ENCODE measurements at regions of chr12 and their contacts with region 1.

Region 1: DNA sequence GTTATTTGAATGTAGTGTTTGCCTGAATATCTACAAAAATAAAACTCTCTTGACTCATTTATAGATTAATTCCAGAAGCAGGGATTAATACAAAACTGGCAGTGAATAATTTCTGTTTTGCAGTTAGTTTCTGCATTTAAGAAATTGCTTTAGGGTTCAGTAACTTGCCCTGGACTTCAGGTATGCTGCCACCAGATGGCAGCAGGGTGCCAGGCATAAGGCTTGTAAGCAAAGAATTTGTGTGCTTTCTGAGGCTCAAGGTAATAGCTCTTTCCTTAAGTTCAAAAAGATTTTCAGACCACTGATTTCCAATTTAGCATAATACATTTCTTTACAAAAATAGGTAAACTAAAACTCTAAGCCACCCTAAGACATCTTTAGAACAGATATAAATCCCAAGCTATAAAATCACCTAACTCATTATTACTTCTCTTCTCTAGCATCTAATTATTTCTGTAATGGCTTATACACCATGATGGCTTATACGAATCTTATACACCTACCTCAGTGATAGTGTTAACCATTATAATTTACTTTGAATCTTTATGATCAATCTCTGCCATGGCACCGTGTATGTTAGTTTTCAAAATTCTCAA is 398.3 kb downstream of the APAF1 start:
- DNase-seq: peak; percentile 47 to 73
- H3K4me3 ChIP-seq: no peak overlapping the region
- H3K27ac ChIP-seq: no peak overlapping the region
- H3K4me1 ChIP-seq: no peaks in the 10 kb centered on the region
- H3K27me3 ChIP-seq: no peaks in the 10 kb centered on the region
- CTCF ChIP-seq: peak; percentile 64 to 85 (median 82)
- EP300 ChIP-seq: no peak
- POLR2A ChIP-seq: no peak
- RAD21 ChIP-seq: peak; percentile 99

Region 2: DNA sequence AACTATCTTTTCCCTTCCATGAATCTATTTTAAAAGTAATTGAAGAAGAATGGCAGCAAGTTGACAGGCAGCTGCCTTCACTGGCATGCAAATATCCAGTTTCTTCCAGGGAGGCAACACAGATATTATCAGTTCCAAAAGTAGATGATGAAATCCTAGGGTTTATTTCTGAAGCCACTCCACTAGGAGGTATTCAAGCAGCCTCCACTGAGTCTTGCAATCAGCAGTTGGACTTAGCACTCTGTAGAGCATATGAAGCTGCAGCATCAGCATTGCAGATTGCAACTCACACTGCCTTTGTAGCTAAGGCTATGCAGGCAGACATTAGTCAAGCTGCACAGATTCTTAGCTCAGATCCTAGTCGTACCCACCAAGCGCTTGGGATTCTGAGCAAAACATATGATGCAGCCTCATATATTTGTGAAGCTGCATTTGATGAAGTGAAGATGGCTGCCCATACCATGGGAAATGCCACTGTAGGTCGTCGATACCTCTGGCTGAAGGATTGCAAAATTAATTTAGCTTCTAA is 509.6 kb before region 1 on chr12:
- CTCF ChIA-PET with region 1: no interaction called
- POLR2A ChIA-PET with region 1: no interaction called
- DNase-seq: no peak
- H3K4me3 ChIP-seq: no peak overlapping the region
- H3K27ac ChIP-seq: no peak overlapping the region; the same call in 1 of the 2 replicates
- H3K4me1 ChIP-seq: no peaks in the 10 kb centered on the region
- H3K27me3 ChIP-seq: no peaks in the 10 kb centered on the region
- CTCF ChIP-seq: no peak
- EP300 ChIP-seq: no peak
- POLR2A ChIP-seq: no peak
- RAD21 ChIP-seq: no peak

Region 3: GRCh38 chr12:98909749-98910148 is 133.7 kb before region 1 on chr12:
- CTCF ChIA-PET with region 1: no interaction called
- POLR2A ChIA-PET with region 1: no interaction called
- DNase-seq: peak; percentile 33 to 70
- H3K4me3 ChIP-seq: no peak overlapping the region
- H3K27ac ChIP-seq: no peak overlapping the region
- H3K4me1 ChIP-seq: no peaks in the 10 kb centered on the region
- H3K27me3 ChIP-seq: no peaks in the 10 kb centered on the region
- CTCF ChIP-seq: no peak
- EP300 ChIP-seq: no peak
- POLR2A ChIP-seq: no peak
- RAD21 ChIP-seq: peak in 1 of 2 experiments; percentile 14; a peak in 1 of 4 replicates

Region 4: DNA sequence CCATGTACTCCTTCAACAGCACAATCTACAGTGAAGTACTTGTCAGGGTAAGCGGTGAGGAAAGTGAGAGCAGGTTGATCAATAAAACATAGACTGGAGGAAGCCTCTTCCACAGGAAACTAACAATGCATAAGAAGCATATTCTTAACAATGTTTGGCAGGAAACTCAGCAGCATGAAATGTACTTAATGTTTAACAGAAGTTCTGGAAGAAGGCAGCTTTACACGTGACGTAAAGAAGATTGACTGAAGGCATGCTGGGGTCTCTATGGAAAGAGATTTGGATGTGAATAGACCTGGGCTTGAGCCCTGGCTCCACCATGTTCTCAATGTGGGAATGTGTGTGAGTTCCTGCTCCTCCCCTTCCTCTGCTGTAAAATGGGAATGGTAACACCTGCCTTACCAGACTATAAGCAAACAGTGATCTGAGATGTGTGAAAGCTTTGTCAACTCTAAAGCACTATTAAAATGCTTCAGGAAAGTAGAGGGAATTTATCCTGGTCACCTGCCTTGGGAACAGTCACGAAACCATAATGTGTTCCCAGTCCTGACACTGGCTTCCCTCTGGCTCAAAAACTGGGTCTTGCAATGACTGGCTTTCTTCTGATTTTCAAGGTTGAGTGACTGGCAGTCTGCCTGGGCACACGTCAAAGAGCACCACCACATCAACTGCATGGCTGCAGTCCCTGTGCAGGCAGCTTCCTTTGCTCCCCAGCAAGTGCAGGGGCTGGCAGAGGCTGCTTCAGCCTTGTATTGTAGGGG is 13.7 kb before region 1 on chr12:
- CTCF ChIA-PET with region 1: interaction called, 56 read pairs
- POLR2A ChIA-PET with region 1: no interaction called
- DNase-seq: no peak
- H3K4me3 ChIP-seq: no peak overlapping the region
- H3K27ac ChIP-seq: no peak overlapping the region
- H3K4me1 ChIP-seq: no peaks in the 10 kb centered on the region; a peak in 2 of 7 replicates
- H3K27me3 ChIP-seq: peaks cover 0 to 3% (median under 1%) of the 10 kb centered on the region in 4 experiments; a peak in 2 of 7 replicates
- CTCF ChIP-seq: no peak
- EP300 ChIP-seq: no peak
- POLR2A ChIP-seq: no peak
- RAD21 ChIP-seq: no peak

Region 5: DNA sequence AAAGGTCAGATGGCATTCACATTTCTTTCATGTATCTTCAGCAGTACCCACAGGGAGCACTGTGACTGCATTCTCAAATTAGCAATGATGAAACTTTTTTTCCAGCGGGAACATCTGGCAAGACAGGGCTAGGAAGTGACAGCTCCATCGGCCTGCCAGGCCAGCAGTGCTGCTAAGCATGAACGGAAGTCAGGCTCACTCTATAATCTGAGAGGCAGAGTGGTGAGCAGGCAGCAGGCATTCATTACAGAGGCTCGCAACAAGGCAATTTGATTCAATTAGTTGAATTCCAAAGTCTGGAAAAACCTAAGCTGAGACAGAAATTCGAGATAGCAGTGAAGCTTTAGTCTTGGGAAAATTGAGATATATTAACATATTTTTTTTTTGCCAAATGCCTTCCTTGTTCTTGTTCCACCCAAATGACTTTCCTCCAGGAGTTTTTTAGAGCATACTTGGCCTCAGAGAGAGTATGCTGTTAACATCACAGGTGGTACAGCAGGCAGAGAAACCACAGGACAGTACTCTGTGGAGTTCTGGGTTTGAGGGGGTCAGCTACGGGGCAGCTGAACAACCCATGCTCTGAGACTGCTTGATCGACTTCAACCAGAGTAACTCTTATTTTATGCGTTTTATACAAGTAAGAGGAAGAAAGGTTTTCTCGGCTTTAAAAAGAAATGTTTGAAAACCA is 16.6 kb after region 1 on chr12:
- CTCF ChIA-PET with region 1: interaction called, 32 read pairs
- POLR2A ChIA-PET with region 1: no interaction called
- DNase-seq: no peak
- H3K4me3 ChIP-seq: no peak overlapping the region
- H3K27ac ChIP-seq: no peak overlapping the region
- H3K4me1 ChIP-seq: no peaks in the 10 kb centered on the region
- H3K27me3 ChIP-seq: no peaks in the 10 kb centered on the region
- CTCF ChIP-seq: no peak
- EP300 ChIP-seq: no peak
- POLR2A ChIP-seq: no peak
- RAD21 ChIP-seq: no peak

Region 6: DNA sequence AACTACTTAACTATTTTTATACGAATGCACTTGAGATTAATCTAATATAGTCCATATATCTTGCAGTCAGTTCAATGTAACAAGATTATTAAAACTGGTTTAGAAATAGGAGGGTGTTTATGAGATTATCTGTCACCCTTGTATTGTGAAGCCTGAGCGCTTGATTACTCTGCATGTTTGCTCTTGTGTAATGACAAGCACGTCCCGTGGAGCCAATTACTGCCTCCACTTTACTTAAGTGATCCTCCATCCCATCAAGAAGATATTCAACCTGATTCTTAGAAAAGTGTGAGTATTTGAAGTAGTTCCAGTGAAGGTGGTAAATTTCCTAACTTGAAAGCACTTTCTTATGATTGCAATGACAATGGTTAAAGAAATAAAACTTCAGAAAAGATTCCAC is 188.9 kb after region 1 on chr12:
- CTCF ChIA-PET with region 1: interaction called, 10 read pairs
- POLR2A ChIA-PET with region 1: no interaction called
- DNase-seq: no peak
- H3K4me3 ChIP-seq: no peak overlapping the region
- H3K27ac ChIP-seq: no peak overlapping the region
- H3K4me1 ChIP-seq: no peaks in the 10 kb centered on the region
- H3K27me3 ChIP-seq: no peaks in the 10 kb centered on the region
- CTCF ChIP-seq: no peak
- EP300 ChIP-seq: no peak
- POLR2A ChIP-seq: no peak
- RAD21 ChIP-seq: no peak

Region 7: DNA sequence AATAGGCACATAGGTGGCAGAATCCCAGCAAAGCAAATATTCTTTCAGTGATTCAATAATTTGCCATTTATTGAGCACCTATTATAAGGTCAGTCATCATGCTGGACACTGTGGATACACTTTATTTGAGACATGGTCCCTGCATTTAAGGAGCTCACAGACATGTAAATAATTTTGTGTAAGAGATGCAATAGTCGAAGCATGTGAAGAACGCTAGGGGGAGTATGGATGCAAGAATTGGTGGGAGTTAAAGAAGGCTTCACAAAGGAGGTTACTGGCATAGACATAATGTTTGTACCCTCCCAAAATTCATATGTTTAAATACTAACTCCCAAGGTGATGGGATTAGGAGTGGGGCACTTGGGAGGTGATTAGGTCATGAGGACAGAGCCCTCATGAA is 343.5 kb after region 1 on chr12:
- CTCF ChIA-PET with region 1: interaction called, 31 read pairs
- POLR2A ChIA-PET with region 1: no interaction called
- DNase-seq: no peak
- H3K4me3 ChIP-seq: no peak overlapping the region
- H3K27ac ChIP-seq: no peak overlapping the region
- H3K4me1 ChIP-seq: no peaks in the 10 kb centered on the region; a peak in 1 of 7 replicates
- H3K27me3 ChIP-seq: no peaks in the 10 kb centered on the region
- CTCF ChIP-seq: peak in 2 of 3 experiments; percentile 36 to 59; a peak in 2 of 4 replicates
- EP300 ChIP-seq: no peak
- POLR2A ChIP-seq: no peak
- RAD21 ChIP-seq: peak; percentile 67 to 69

Measured in H1 (cell line).